Activated T-helper 2 cell treated with anti-CD3 and anti-CD28 coated beads, Interferon-gamma antibody, Interleukin-2, Interleukin-4, amounts not matched to agents 10 μg/mL and 5 μg/mL and 100 μg/mL, durations not matched to agents 14 hours and 24 hours and 36 hours (primary cell): ENCODE measurements at regions of chr10 and their contacts with region 1.

Region 1: DNA sequence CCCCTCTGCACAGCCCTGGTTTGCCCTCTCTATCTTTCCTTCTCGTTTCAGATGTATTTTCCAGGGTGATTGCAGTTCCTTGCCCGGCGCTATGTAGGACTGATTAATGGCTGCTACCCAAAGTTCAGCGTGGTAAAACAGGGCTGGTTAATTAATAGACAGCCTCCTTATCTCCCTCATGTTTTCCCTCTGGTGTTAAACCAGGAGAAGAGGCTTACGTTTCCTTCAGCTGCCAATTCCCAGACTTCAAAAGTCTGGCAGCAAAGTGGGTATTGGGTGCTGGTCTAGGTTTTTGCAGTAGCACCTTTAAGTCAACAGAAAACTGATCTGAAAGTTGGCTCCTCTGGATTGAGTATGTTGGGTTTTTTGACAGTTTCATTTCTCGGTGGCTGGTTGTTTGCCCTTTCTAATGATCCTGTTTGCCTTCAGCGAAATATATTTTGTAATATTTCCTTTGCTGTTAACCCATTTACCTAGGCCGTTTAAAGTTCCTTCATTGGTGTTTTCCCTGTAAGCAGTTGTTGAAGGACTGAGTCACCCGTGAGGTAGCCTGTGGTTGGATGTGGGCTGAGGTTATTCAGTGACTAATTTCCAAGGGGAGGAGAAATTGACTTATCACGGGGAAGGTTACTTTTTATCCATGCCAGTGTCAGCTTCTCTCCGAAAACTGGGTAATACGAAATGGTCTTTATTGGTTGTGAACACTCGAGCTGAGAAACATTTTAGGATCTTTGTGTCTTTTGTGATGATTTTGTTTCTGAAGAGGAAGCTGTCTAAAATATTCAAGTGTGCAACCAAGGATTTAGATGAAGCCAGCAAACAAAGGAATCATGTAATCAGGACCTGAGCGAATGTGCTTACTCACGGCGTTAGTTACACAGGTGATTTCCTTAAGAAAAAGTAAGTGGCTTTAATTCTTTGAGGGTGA is 257.2 kb downstream of the KIAA1217 start:
- DNase-seq: peak; percentile 31
- H3K4me3 Mint-ChIP-seq: peak overlapping the region; percentile 19
- H3K27ac Mint-ChIP-seq: peak overlapping the region; percentile 57
- H3K4me1 Mint-ChIP-seq: peaks cover 48% of the 10 kb centered on the region
- H3K27me3 Mint-ChIP-seq: peaks cover 21% of the 10 kb centered on the region

Region 2: GRCh38 chr10:23530079-23530478 is 936.1 kb before region 1 on chr10:
- intact Hi-C with region 1: loop called (anchors 10 kb)
- DNase-seq: no peak
- H3K4me3 Mint-ChIP-seq: no peak overlapping the region
- H3K27ac Mint-ChIP-seq: no peak overlapping the region
- H3K4me1 Mint-ChIP-seq: peaks cover 16% of the 10 kb centered on the region
- H3K27me3 Mint-ChIP-seq: no peaks in the 10 kb centered on the region

Region 3: GRCh38 chr10:24383681-24384106 is 82.5 kb before region 1 on chr10:
- intact Hi-C with region 1: loop called (anchors 1 kb)
- DNase-seq: peak; percentile 9
- H3K4me3 Mint-ChIP-seq: no peak overlapping the region
- H3K27ac Mint-ChIP-seq: peak overlapping the region; percentile 67
- H3K4me1 Mint-ChIP-seq: peaks cover 15% of the 10 kb centered on the region
- H3K27me3 Mint-ChIP-seq: no peaks in the 10 kb centered on the region

Region 4: GRCh38 chr10:24603333-24603732 is 137.2 kb after region 1 on chr10:
- intact Hi-C with region 1: loop called (anchors 10 kb)
- DNase-seq: no peak
- H3K4me3 Mint-ChIP-seq: no peak overlapping the region
- H3K27ac Mint-ChIP-seq: peak overlapping the region; percentile 83
- H3K4me1 Mint-ChIP-seq: peaks cover 33% of the 10 kb centered on the region
- H3K27me3 Mint-ChIP-seq: no peaks in the 10 kb centered on the region

Region 5: DNA sequence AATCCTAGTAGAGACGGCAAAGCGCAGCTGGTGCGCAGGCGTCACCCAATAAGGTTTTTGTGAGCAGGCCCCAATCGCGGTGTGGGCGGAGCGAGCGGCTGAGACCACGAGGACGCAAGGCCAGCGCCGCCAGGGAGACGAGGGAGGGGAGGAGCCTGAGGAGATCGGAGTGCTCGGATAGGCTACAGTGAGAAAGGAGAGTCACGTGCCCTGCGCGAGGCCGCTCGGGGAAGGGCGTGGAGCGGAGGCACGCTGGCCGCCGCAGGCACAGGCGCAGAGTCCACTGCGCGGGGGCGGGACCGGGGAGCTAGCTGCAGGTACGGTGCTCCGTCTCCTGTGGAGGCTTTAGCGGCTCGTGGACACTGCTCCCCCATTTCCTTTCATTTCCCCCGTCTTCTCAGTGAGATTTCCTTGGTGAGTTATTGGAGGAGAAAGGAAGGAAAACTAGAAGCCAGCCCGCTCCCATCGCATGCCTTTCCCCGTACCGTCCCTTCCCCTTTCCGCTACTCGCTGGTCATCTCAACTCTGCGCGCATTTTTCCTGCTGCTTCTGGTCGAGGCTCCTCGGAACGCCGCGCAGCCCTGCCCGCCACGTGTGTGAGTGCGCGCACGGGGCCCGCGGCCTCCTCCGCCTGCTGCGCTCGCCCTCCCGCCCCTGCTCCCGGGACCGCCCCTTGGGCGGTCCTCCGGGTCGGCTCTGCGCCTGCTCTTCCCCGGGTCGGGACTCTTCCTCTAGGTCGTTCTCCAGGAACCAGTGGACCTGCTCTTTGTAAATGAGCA is 550.4 kb after region 1 on chr10 and contains the start of gene THNSL1:
- intact Hi-C with region 1: no loop called
- DNase-seq: peak; percentile 97
- H3K4me3 Mint-ChIP-seq: peak within 1 kb of the TSS; percentile 89
- H3K27ac Mint-ChIP-seq: peak within 1 kb of the TSS; percentile 95
- H3K4me1 Mint-ChIP-seq: peaks cover 14% of the 10 kb centered on the region
- H3K27me3 Mint-ChIP-seq: peaks cover 4% of the 10 kb centered on the region
- total RNA-seq, gene THNSL1: 3.1 TPM in 2 replicates

Region 6: DNA sequence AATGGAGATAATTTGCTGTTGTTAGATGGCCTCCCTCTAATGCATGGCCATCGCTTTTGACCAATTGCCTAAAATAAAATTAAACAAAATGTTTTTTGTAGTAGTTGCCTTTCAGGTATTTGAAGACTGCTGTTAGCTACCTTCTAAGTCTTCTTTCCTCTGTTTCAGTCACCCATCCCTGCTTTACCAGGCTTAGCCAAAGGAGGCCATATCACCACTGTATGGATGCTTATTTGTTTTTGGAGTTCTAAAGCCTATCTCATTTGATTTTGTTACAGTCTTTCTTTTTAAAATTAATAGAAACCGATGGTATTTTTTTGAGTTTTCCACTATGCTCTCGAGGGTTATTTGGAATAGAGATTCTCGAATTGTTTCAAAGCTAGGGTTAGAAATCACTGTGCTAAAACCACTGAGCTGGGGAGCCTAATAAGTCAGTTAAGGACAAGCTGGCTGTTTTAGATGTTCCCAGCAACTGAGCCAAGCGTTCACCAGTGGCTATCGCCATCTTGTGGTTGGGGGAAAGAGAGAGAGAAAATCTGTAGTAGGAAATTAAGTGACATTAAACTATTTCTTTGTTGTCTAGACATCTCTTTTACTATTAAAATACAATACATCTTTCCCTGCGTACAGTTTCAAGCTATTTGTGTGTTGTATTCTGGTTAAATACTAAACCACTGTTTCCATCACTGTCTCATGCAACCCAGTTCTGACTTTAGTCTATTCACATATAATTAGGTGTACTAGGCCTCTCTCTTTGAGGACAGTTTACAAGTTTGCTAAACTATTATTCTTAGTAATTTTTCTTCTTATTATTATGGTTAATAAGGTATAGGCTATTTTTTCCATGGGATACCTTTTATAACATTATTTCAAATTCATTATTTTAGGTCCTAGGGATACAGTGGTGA is 760.9 kb after region 1 on chr10:
- intact Hi-C with region 1: no loop called
- DNase-seq: no peak
- H3K4me3 Mint-ChIP-seq: no peak overlapping the region
- H3K27ac Mint-ChIP-seq: no peak overlapping the region
- H3K4me1 Mint-ChIP-seq: no peaks in the 10 kb centered on the region
- H3K27me3 Mint-ChIP-seq: no peaks in the 10 kb centered on the region